ENCODE measurements at regions of chr10 and their contacts with region 1.

Region 1: GRCh38 chr10:92087750-92088395 is 164.3 kb downstream of the BTAF1 start:
- H3K4me3 ChIP-seq: no peak overlapping the region
- H3K27ac ChIP-seq: no peak overlapping the region
- H3K4me1 ChIP-seq: no peaks in the 10 kb centered on the region
- CTCF ChIP-seq: peak; percentile 94

Region 2: DNA sequence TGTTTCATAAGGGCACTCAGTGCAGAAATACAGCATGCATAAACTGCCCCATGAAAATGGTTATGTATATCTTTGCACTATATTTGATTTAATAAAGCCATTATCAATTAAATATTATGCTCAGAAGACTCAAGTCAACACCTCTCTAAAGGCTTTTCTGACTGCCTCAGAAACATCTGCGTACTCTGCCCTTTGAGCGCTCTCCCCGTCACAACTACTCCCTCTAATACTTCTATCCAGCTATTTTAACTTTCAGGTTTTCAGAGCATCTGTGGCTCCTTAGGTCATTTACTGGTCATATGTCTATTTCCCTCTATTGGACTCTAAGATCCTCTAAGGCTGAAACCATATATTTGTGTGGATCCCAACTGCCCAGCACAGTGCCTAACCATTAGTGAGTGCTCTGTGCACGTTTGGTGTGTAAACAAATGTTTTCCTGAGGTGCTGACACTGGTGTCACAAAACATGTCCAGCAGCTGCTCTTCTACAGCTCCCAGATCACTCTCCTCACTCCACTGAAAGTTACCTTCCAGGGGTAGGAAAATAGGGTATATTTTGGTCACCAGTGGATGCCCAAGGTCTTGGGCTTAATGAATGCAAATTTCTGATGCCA is 14.8 kb after region 1 on chr10:
- CTCF ChIA-PET with region 1: interaction called, 13 read pairs
- POLR2A ChIA-PET with region 1: no interaction called
- H3K4me3 ChIP-seq: no peak overlapping the region
- H3K27ac ChIP-seq: no peak overlapping the region
- H3K4me1 ChIP-seq: peaks cover 2% of the 10 kb centered on the region; the same call in 1 of the 2 replicates
- CTCF ChIP-seq: no peak

Region 3: GRCh38 chr10:92290837-92291615 is 203.2 kb after region 1 on chr10 and contains the starts of genes CPEB3 and MARCHF5:
- CTCF ChIA-PET with region 1: interaction called, 41 read pairs
- POLR2A ChIA-PET with region 1: interaction called, 7 read pairs
- H3K4me3 ChIP-seq: peak within 1 kb of the TSS; percentile 100
- H3K27ac ChIP-seq: peak within 1 kb of the TSS; percentile 91
- H3K4me1 ChIP-seq: peaks cover 2% of the 10 kb centered on the region; the same call in 1 of the 2 replicates
- CTCF ChIP-seq: peak; percentile 96

Region 4: GRCh38 chr10:92432596-92432995 is 344.7 kb after region 1 on chr10:
- CTCF ChIA-PET with region 1: interaction called, 48 read pairs
- POLR2A ChIA-PET with region 1: no interaction called
- H3K4me3 ChIP-seq: no peak overlapping the region
- H3K27ac ChIP-seq: no peak overlapping the region
- H3K4me1 ChIP-seq: no peaks in the 10 kb centered on the region
- CTCF ChIP-seq: no peak

Measured in HEK293 (cell line).